ENCODE measurements at regions of chr12 and their contacts with region 1.

Region 1: DNA sequence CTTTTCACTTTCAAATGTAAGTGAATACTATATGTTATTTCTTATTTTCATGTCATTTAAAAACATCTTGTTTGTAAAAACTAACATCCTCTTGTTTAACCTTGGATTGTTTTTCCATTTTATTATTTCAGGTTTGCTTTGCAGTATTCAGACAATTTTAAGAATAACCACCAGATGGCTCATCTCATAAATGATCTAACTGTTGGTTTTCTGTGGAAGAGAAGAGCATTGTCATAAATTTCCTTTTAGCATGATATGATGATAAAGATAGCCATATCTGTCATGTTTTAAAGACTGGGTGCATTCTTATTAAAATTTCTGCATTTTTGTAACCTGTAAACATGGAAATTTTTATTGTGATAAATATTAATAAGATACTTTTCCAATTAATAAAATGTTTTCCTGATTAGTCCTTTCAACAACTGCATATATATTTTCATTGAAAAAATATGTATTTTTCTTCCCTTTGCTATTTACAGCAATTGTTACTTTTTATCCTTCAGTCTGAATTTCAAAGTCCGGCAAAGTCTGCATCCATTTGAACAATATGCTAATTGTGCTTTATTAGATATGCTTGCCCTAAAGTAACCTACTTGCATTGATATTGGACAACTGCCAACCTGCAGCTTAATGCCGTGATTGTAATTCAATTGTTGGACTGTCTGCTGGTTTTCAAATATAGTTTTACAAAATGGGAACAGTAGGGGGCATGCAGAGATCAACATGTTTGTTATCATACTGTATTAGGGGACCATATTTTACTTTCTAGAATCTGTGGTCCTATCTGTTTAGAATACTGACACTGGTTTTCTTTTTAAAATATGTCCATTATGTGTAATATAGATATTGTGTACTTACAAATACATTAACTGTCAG is 163.4 kb downstream of the GARIN6 start:
- DNase-seq: no peak
- H3K4me3 ChIP-seq: no peak overlapping the region
- H3K27ac ChIP-seq: no peak overlapping the region
- H3K4me1 ChIP-seq: no peaks in the 10 kb centered on the region
- H3K27me3 ChIP-seq: no peaks in the 10 kb centered on the region
- CTCF ChIP-seq: peak in 2 of 3 experiments; percentile 30 to 51

Region 2: GRCh38 chr12:99911081-99911480 is 100.1 kb after region 1 on chr12:
- intact Hi-C with region 1: loop called (anchors 5 kb)
- DNase-seq: peak; percentile 10 to 82
- H3K4me3 ChIP-seq: peak overlapping the region; percentile 28 to 48
- H3K27ac ChIP-seq: peak overlapping the region; percentile 68 to 72
- H3K4me1 ChIP-seq: peaks cover 3 to 20% of the 10 kb centered on the region in 2 donors
- H3K27me3 ChIP-seq: no peaks in the 10 kb centered on the region
- CTCF ChIP-seq: peak in 1 of 3 experiments; percentile 6

Region 3: DNA sequence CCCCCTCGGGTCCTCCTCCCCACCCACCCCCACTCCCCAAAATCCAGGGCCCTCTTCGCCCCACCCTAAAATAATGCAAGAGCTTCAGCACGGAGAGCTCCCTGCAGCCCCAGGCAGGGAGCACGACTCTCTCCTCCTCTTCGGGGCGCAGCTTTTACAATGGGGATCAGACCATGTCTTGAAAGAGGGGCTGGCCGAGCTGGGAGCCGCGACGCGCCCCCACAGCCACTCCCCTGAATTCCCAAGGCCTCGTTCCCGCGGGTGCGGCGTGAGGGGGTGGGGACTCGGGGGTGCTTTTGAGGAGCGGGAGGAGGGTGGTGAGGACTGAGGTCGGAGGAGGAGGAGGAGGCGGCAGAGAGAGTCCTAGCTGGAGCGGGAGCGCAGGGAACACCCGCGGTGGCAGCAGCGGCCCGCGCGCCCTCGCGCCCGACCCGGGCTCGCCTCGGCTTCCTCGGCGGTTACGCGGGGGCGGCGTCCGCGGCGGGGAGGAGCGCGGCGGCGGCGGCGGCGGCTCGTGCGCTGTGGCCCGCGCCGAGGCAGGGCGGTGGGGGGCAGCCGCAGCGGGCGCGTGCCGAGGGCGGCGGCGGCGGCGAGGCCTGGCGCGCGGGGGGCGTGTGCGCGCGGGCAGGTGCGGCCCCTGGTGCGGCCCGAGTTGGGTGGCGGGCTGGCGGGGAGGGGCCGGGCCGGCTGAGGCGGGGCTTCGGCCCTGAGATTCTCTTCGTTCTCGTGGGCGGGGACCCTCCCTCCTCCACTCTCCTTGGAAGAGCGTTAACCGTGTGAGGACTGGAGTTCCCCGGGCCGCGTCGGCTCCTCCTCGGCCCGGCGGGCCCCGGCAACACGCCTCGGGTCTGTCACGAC is 173.5 kb after region 1 on chr12 and contains the start of gene ANKS1B:
- intact Hi-C with region 1: loop called (anchors 5 kb)
- DNase-seq: peak in 1 of 2 donors; percentile 82
- H3K4me3 ChIP-seq: peak within 1 kb of the TSS; percentile 74 to 96
- H3K27ac ChIP-seq: peak within 1 kb of the TSS; percentile 79 to 90
- H3K4me1 ChIP-seq: no peaks in the 10 kb centered on the region
- H3K27me3 ChIP-seq: no peaks in the 10 kb centered on the region
- CTCF ChIP-seq: no peak
- total RNA-seq, gene ANKS1B: 8.2 TPM

Region 4: DNA sequence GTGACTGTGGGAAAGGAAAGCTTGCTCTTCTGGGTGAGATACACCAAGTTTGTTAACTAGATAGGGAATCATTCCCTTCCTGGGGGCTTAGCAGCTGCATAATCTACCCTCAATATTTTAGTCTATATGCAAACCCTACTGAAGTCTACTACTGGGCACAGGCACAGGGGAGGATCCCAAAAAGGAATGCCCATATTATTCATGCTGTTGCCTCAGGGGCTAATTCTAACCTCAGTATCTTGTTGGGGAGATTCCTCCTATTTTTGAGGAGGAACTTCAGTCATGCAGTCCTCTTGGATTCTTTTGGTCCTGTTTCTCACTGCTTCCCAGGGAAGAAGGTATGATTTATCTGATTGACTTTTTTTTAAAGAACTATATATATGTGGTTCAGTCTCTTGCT is 232.7 kb after region 1 on chr12:
- intact Hi-C with region 1: loop called (anchors 5 kb)
- DNase-seq: no peak
- H3K4me3 ChIP-seq: no peak overlapping the region
- H3K27ac ChIP-seq: no peak overlapping the region
- H3K4me1 ChIP-seq: no peaks in the 10 kb centered on the region
- H3K27me3 ChIP-seq: no peaks in the 10 kb centered on the region
- CTCF ChIP-seq: no peak